Astrocyte of the cerebellum (primary cell): ENCODE measurements at regions of chr5 and their contacts with region 1.

Region 1: GRCh38 chr5:54087436-54087835 is 222.9 kb downstream of the ARL15 start:
- DNase-seq: peak; percentile 85
- H3K4me3 ChIP-seq: no peak overlapping the region
- CTCF ChIP-seq: no peak

Region 2: GRCh38 chr5:54021413-54022164 is 65.8 kb before region 1 on chr5:
- in situ Hi-C with region 1: no loop called
- DNase-seq: no peak
- H3K4me3 ChIP-seq: no peak overlapping the region
- CTCF ChIP-seq: no peak

Region 3: DNA sequence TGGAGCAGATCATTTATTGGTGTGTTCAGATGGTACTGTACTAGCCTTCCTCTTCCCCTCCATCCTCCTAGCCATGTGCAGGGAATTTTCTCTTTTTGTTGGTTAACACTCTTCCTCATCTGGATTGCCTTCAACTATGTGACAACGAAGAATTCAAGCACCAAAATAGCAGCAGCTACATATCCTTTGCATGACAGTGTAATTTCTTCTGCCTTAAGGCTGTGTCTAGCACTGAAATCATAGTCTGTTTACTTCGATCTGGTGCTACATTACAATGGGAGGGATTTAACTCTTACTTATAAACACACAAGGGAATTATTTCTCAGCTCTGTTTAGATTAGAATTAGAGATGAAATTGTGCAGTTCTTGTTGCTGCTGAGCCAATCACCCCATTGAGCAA is 37.5 kb before region 1 on chr5:
- in situ Hi-C with region 1: no loop called
- DNase-seq: no peak
- H3K4me3 ChIP-seq: no peak overlapping the region
- CTCF ChIP-seq: no peak

Region 4: DNA sequence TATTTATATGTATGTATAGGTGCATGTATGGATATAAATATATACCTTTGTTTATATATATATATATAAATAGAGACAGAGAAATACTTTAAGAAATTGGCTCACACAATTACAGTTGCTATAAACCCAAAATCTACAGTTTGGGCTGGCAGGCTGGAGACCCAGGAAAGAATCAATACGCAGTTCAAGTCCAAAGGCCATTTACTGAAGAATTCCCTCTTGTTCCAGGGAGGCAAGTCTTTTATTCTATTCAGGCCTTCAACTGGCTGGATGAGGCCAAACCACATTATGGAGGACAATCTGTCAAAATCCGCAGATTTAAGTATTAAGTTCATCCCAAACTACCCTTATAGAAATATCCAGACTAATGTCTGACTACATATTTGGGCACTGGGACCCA is 78.3 kb after region 1 on chr5:
- in situ Hi-C with region 1: loop called (anchors 5 kb)
- DNase-seq: no peak
- H3K4me3 ChIP-seq: no peak overlapping the region
- CTCF ChIP-seq: no peak